Right ventricle myocardium inferior (tissue), 1 donor: ENCODE measurements at regions of chr4 and their contacts with region 1.

Region 1: DNA sequence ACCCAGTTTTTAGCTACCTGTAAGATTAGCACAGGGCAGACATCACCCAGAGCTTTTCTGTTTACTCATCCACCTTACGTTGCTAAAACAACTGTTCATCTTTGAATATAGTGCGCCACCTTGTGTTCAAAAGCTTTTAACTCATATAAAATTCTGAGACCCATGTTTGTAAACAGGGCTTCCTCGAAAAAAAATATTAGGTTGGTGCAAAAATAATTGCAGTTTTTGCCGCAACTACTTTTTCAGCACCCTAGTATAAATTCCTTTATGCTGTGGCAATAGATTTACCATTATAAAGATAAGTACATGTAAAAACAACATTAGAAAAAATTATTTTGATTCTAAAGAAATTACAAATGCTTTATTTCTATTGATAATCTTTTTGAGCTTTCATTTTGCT is 147.9 kb downstream of the LRBA start:
- DNase-seq: no peak
- ATAC-seq: peak; percentile 37

Region 2: GRCh38 chr4:150297861-150298474 is 569.2 kb before region 1 on chr4:
- intact Hi-C with region 1: loop called (anchors 2 kb)
- DNase-seq: no peak
- ATAC-seq: no peak

Region 3: GRCh38 chr4:150722908-150723362 is 144.2 kb before region 1 on chr4:
- intact Hi-C with region 1: loop called (anchors 2 kb)
- DNase-seq: peak; percentile 90
- ATAC-seq: peak; percentile 99